Keratinocyte (primary cell): ENCODE measurements at regions of chr1 and their contacts with region 1.

Region 1: DNA sequence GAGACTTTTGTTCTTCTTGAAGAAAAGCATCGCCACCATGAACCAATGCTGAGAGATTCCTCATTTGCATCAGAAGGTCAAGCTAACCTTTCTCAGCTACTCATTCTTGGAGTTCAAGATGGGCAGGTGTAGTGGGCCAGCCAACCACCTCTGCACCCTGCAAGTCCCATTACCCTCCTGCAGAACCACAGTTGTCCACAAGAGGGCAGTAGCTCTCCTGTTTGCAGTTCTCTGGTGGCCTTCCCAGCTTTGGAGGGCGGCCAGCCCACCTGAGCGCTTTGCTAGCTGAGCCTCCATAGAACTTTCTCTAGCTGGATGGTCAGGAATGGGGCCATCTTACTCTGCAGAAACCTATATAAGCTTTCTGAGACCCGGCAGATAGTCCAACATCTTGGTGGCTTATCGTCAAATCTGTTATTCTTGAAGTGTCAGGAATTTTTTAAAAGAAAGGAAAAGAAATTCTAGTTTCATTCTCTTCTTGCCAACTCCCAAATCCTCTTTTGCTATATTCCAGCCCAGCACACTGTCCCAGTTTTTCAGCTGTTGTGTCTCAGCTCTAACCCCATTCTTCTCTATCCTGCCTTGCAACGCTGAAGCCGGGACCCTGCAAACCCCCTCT is 11.0 kb upstream of the LMX1A start:
- DNase-seq: peak; percentile 69
- H3K4me3 ChIP-seq: no peak overlapping the region
- H3K27ac ChIP-seq: no peak overlapping the region
- H3K4me1 ChIP-seq: peaks cover 14% of the 10 kb centered on the region
- H3K27me3 ChIP-seq: peaks cover 27% of the 10 kb centered on the region
- CTCF ChIP-seq: peak; percentile 92 to 98 (median 97)

Region 2: GRCh38 chr1:165144757-165145397 is 222.6 kb before region 1 on chr1:
- dilution Hi-C with region 1: loop called (anchors 10 kb)
- DNase-seq: no peak
- H3K4me3 ChIP-seq: no peak overlapping the region
- H3K27ac ChIP-seq: no peak overlapping the region
- H3K4me1 ChIP-seq: no peaks in the 10 kb centered on the region
- H3K27me3 ChIP-seq: no peaks in the 10 kb centered on the region
- CTCF ChIP-seq: peak; percentile 75 to 76 (median 76)

Region 3: DNA sequence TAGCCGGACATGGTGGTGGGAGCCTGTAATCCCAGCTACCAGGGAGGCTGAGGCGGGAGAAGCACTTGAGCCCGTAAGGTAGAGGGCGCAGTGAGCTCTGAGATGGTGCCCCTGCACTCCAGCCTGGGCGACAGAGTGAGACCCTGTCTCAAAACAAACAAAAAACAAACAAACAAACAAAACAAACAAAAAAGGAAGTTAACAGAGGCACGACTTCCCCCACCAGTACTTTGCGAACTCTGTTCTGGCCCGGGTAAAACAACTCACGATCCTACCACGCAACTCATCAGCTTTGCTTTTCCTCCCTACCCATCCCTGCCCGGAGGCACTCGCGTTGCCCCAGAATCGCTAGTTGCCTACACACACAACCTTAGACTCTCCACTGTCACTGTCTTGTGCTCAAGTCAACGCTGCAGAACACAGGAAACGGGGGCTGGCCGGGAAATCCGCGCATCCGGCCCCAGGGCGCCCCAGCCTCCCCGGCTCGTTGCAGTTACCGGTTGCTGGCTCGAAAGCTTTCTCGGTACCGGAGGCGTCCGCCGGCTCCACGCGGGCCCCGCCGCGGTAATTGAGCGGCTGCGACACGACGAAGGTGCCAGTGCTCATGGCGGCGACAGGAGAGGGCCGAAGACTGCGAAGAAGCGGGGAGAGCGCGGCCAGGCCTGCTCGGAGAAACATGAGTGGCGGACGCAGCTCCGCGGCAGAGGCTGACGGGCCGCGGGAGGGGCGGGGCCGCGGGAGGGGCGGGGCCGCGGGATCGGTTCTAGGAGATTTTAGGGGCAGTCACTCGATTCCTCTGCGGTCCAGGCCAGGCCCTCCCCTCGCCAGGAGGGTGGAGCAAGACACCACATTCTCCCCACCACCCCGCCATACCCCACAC is 330.6 kb after region 1 on chr1 and contains the start of gene ALDH9A1:
- dilution Hi-C with region 1: no loop called
- DNase-seq: peak; percentile 33
- H3K4me3 ChIP-seq: peak within 1 kb of the TSS; percentile 81 to 87 (median 85)
- H3K27ac ChIP-seq: peak within 1 kb of the TSS; percentile 78
- H3K4me1 ChIP-seq: peaks cover 16% of the 10 kb centered on the region
- H3K27me3 ChIP-seq: no peaks in the 10 kb centered on the region
- CTCF ChIP-seq: peak; percentile 22 to 43 (median 22)
- polyA plus RNA-seq, gene ALDH9A1: 52.8 to 77.4 TPM (median 75.2 TPM) in 3 replicates